H1 (cell line): ENCODE measurements at regions of chr19 and their contacts with region 1.

Region 1: DNA sequence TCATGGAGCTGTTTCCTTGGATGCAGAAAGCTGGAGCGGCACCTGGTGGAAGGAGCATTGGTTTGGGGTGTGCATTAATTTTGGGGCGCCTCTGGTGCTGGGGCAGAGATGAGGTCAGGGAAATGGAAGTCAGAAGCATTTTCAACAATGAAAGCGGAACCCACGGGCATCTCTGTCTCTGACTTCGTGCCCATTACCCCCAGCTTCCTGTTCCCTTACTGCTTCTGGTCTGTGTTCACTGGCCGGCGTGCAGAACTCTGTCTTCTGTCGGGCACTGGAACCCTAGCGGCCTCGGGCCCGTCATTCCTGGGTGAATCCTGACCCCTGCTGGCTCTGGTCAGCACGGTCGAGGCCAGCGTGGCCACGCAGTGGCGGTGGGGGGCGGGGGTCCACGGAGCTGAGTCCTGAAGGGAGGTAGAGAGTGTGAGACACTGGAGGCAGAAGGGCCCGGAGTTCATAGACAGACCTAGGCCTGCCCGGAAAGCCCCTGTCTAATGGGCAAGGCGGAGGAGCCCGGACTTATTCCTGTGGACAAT is 7.9 kb upstream of the LINGO3 start:
- DNase-seq: peak in 1 of 2 experiments; percentile 86
- H3K4me3 ChIP-seq: no peak overlapping the region; a peak in 1 of 8 replicates
- H3K27ac ChIP-seq: no peak overlapping the region
- H3K4me1 ChIP-seq: peaks cover 0 to 4% (median under 1%) of the 10 kb centered on the region in 4 experiments; a peak in 4 of 7 replicates
- H3K27me3 ChIP-seq: no peaks in the 10 kb centered on the region
- CTCF ChIP-seq: peak; percentile 85 to 93 (median 88)
- EP300 ChIP-seq: no peak
- POLR2A ChIP-seq: no peak
- RAD21 ChIP-seq: peak; percentile 95 to 96

Region 2: GRCh38 chr19:2236314-2237050 is 79.4 kb before region 1 on chr19 and contains the starts of genes PLEKHJ1 and SF3A2:
- CTCF ChIA-PET with region 1: interaction called, 18 read pairs
- POLR2A ChIA-PET with region 1: interaction called, 6 read pairs
- DNase-seq: peak; percentile 87 to 99
- H3K4me3 ChIP-seq: peak within 1 kb of the TSS; percentile 77 to 86 (median 80)
- H3K27ac ChIP-seq: peak within 1 kb of the TSS; percentile 93
- H3K4me1 ChIP-seq: peaks cover 0 to 24% (median 14%) of the 10 kb centered on the region in 4 experiments; a peak in 6 of 7 replicates
- H3K27me3 ChIP-seq: no peaks in the 10 kb centered on the region
- CTCF ChIP-seq: peak; percentile 93 to 100 (median 97)
- EP300 ChIP-seq: no peak
- POLR2A ChIP-seq: peak; percentile 77 to 90
- RAD21 ChIP-seq: peak; percentile 86 to 91
- total RNA-seq, gene PLEKHJ1: 135 TPM in 2 replicates
- total RNA-seq, gene SF3A2: 142 and 146 TPM in 2 replicates

Region 3: DNA sequence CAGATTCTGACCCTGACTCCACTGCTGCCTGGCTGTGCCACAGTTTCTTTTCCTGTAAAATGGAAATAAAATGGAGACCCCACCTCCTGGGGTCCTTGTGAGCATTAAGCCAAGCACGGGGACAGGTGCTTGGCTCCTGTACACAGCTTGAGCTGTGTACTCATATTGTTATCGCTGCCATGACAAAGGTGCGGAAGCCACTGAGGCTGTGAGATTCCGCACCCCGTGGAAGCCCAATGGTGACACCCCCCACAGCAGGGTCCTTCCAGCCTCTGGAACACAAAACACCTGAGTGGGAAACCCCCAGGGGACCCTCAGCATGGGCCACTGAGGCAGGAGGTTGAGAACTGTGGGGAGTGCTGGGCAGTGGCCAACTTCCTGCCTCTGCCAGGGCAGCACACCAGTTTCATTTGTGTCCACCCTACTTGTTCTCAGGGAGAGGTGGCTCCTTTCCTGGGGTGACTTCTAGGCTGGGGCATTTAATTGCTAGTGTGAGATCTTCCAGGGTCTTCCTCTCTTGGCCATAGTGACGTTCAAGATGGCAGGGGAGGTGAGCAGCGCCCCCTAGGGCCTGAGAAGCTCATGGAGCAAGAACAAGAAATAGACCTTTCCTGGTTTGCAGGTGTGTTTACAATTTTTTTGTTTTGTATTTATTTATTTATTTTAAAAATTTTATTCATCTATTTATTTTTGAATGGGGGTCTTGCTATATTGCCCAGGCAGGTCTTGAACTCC is 54.3 kb before region 1 on chr19:
- CTCF ChIA-PET with region 1: interaction called, 18 read pairs
- POLR2A ChIA-PET with region 1: interaction called, 6 read pairs
- DNase-seq: peak in 1 of 2 experiments; percentile 78
- H3K4me3 ChIP-seq: no peak overlapping the region
- H3K27ac ChIP-seq: no peak overlapping the region
- H3K4me1 ChIP-seq: 0 out of 7 replicates have a peak, but pooled peaks cover 0 to 3% (median 0%) of the 10 kb centered on the region in 4 experiments
- H3K27me3 ChIP-seq: no peaks in the 10 kb centered on the region; a peak in 1 of 7 replicates
- CTCF ChIP-seq: peak; percentile 56 to 73 (median 70)
- EP300 ChIP-seq: no peak
- POLR2A ChIP-seq: no peak
- RAD21 ChIP-seq: peak; percentile 40 to 48

Region 4: DNA sequence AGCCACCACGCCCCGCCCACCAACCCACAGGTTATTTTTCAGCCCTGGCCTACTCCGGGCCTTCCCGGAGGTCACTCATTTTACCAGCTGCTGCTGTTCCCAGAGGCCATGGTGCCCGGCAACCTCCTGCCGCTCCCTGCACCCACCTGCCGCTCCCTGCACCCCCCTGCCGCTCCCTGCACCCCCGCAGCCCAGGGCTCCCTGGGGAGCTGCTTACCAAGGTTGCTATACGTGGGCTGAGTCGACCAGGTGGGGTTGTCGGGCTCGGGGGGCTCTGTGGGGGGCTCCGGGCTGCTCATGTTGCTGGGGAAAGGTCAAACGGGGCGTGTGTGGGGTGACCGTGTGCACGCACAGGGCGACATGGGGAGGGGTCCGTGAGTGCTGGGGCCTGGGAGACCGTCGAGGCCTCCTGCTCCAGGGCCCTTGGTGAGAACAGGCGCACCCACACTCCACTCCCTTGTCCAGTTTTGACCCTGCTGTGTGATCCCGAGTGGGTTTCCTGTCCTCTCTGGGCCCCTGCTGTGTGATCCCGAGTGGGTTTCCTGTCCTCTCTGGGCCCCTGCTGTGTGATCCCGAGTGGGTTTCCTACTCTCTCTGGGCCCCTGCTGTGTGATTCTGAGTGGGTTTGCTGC is 35.1 kb before region 1 on chr19:
- CTCF ChIA-PET with region 1: interaction called, 106 read pairs
- POLR2A ChIA-PET with region 1: interaction called, 18 read pairs
- DNase-seq: no peak
- H3K4me3 ChIP-seq: no peak overlapping the region
- H3K27ac ChIP-seq: no peak overlapping the region
- H3K4me1 ChIP-seq: peaks cover 0 to 5% (median 0%) of the 10 kb centered on the region in 4 experiments; a peak in 2 of 7 replicates
- H3K27me3 ChIP-seq: peaks cover 0 to 17% (median 14%) of the 10 kb centered on the region in 4 experiments; a peak in 6 of 7 replicates
- CTCF ChIP-seq: no peak
- EP300 ChIP-seq: no peak
- POLR2A ChIP-seq: no peak
- RAD21 ChIP-seq: no peak

Region 5: DNA sequence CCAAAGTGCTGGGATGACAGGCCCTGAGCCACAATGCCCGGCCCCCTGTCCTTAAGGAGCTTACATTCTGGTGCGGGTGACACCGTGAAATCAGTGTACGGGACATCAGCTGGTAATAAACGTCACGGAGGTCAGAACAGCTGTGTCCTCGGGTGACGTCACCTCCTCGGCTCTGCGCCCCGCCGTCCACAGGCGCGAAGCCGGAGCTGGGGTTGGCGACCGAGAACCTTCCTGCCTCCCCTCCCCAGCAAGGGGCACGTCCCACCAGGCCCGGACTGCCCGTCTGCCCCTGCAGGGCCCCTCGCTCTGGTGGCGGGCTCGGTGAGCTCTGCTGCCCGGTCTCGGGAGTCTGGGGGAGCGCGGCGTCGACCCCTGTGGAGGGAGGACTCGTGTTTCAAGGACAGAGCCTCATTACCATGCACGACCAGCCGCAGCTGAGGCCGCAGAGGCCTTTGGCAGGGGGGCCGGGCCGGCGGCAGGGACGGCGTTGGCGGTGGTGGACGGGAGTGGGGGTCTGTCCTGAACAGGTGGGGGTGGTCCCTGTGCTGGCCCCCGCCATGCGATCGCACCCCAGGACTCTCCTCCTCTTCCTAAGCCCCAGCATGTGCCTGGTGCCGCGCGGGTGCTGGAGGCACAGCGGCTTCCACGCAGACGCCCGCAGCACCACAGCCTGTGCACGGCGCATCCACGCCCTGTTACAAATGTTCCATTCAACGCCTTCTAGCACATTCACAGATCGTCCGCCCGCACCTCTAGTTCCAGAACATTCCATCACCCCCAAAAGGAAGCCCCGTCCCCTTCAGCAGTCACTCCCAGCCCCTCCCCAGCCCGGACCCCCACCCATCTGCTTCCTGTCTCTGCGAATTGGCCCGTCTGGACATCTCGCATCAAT is 13.3 kb before region 1 on chr19:
- CTCF ChIA-PET with region 1: interaction called, 12 read pairs
- POLR2A ChIA-PET with region 1: interaction called, 16 read pairs
- DNase-seq: peak in 1 of 2 experiments; percentile 79
- H3K4me3 ChIP-seq: peak overlapping the region in 3 of 4 experiments; percentile 29 to 54 (median 32); a peak in 5 of 8 replicates
- H3K27ac ChIP-seq: no peak overlapping the region
- H3K4me1 ChIP-seq: peaks cover 0 to 12% (median 8%) of the 10 kb centered on the region in 4 experiments; a peak in 5 of 7 replicates
- H3K27me3 ChIP-seq: peaks cover 0 to 30% (median 19%) of the 10 kb centered on the region in 4 experiments; a peak in 6 of 7 replicates
- CTCF ChIP-seq: no peak
- EP300 ChIP-seq: no peak
- POLR2A ChIP-seq: no peak
- RAD21 ChIP-seq: no peak

Region 6: DNA sequence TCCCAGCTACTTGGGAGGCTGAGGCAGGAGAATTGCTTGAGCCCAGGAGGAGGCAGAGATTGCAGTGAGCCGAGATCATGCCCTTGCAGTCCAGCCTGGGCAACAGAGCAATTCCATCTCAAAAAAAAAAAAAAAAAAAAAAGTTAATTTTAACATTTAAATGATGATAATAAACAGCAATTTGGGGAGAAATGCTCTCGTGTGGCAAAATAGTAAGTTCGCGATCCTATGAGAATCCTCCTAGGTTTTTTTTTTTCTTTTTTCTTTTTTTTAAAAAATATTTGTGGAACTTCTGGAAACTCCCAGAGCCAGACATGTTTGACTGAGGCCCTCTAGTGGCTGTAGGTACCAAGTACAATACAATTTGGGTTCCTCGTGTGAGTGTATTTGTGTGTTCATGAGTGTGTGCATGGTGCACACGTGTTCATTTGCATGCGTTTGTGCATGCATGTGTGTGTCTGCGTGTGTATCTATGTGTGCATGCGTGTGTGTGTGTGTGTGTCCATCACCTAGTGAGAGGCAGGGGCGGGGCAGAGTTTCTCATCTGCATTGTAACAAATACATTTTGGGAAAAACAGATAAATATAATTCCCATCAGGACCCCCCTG is 75.3 kb after region 1 on chr19:
- CTCF ChIA-PET with region 1: interaction called, 29 read pairs
- POLR2A ChIA-PET with region 1: no interaction called
- DNase-seq: no peak
- H3K4me3 ChIP-seq: no peak overlapping the region
- H3K27ac ChIP-seq: no peak overlapping the region
- H3K4me1 ChIP-seq: no peaks in the 10 kb centered on the region
- H3K27me3 ChIP-seq: no peaks in the 10 kb centered on the region; a peak in 1 of 7 replicates
- CTCF ChIP-seq: peak in 2 of 3 experiments; percentile 62 to 74; a peak in 3 of 4 replicates
- EP300 ChIP-seq: no peak
- POLR2A ChIP-seq: no peak
- RAD21 ChIP-seq: peak; percentile 72 to 80